Mammary epithelial cell (primary cell): ENCODE measurements at regions of chr17 and their contacts with region 1.

Region 1: GRCh38 chr17:17001874-17002520 is 30.1 kb upstream of the TNFRSF13B start:
- DNase-seq: peak; percentile 55
- H3K4me3 ChIP-seq: no peak overlapping the region
- H3K27ac ChIP-seq: no peak overlapping the region
- H3K4me1 ChIP-seq: no peaks in the 10 kb centered on the region
- H3K27me3 ChIP-seq: no peaks in the 10 kb centered on the region
- CTCF ChIP-seq: peak; percentile 83 to 96

Region 2: DNA sequence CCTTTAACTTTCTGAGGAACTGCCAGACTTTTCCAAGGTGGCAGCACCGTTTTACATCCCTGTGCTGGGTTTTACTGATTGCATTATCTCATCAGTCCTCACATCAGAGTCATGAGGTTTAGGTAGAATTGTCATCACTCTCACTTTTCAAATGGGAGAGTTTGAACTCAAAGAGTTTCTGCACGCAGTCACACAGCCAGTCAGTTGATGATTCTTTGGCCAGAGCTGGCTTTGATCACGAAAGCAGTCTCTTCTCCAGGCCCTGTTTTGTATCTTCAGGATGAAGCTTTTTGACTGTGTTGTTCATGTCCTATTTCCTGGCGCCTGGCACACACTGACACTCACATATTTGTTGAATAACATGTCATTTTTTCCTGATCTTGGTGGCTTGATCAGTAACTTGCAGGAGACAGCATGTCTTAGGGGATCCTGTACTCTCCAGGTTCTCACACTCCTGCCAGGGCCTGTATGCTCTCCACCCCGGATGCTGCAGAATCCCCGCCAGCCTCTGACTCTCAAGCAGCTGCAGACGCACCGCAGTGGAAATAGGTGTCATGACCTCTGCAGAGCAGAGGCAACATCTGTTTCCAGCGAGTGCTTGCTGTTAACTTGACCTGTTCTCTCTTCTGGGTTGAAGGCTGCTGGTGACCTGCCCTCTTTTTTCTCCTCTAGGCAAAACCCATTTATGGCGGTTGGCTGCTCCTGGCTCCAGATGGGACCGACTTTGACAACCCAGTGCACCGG is 73.2 kb after region 1 on chr17:
- CTCF ChIA-PET with region 1: no interaction called
- dilution Hi-C with region 1: no loop called
- in situ Hi-C with region 1: no loop called
- intact Hi-C with region 1: loop called (anchors 10 kb)
- DNase-seq: peak; percentile 54
- H3K4me3 ChIP-seq: no peak overlapping the region
- H3K27ac ChIP-seq: peak overlapping the region; percentile 9
- H3K4me1 ChIP-seq: peaks cover 54% of the 10 kb centered on the region
- H3K27me3 ChIP-seq: no peaks in the 10 kb centered on the region
- CTCF ChIP-seq: no peak

Region 3: GRCh38 chr17:17115620-17116019 is 113.6 kb after region 1 on chr17:
- CTCF ChIA-PET with region 1: no interaction called
- dilution Hi-C with region 1: no loop called
- in situ Hi-C with region 1: no loop called
- intact Hi-C with region 1: no loop called
- DNase-seq: no peak
- H3K4me3 ChIP-seq: no peak overlapping the region
- H3K27ac ChIP-seq: no peak overlapping the region
- H3K4me1 ChIP-seq: peaks cover 44% of the 10 kb centered on the region
- H3K27me3 ChIP-seq: no peaks in the 10 kb centered on the region
- CTCF ChIP-seq: no peak

Region 4: DNA sequence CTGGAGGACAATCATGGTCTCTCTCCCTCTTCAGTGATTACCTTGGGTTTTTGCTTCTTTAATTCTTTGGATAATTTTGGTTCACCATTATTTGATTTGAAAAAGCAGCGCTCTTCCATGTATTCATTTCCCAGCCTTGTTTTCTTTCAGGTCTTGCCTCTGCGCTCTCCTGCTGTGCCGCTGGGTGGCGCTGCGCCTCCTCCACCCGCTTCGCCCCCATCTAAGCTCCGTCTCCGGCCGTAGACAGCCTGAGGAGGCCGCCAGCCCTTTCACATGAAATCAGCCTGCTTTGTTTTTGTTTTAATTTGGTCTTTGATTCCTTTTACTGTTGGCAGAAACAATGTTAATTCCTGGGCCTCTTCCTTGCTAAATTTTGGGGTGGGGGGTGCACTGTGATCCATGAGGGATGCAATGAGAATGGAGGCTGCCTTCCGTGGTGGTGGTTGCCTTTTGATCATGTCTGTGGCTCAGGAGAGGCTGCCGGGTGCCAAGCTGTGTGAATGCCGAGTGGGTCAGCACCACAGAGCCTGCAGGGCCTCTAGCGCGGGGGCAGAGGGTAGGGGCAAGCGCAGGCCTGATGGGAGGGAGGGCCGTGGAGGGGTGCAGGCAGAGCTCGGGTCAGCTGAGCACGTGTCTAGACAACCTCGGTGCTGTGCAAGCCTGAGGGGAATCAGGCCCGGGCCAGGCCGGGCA is 140.0 kb after region 1 on chr17:
- CTCF ChIA-PET with region 1: no interaction called
- dilution Hi-C with region 1: no loop called
- in situ Hi-C with region 1: no loop called
- intact Hi-C with region 1: loop called (anchors 2 kb)
- DNase-seq: peak; percentile 18
- H3K4me3 ChIP-seq: no peak overlapping the region
- H3K27ac ChIP-seq: no peak overlapping the region
- H3K4me1 ChIP-seq: peaks cover 35% of the 10 kb centered on the region
- H3K27me3 ChIP-seq: no peaks in the 10 kb centered on the region
- CTCF ChIP-seq: peak; percentile 98

Region 5: DNA sequence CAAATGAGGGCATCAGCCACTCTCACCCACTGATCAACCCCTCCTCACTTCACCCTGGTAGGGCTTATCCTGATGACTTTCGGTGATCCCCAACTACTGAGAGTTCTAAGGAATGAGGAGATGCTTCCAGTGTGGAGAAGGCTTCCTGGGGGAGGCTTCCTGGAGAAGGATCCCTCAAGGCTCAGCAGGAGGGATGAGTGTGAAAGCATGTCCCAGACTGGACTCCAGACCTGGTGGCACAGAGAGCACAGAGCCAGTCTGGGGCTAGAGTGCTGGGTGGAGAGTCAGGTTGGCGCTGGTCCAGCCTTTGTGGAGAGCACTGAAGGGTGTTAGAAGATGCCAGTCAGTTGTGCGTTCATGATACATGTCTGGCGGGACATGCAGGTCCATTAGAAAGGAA is 150.4 kb after region 1 on chr17:
- CTCF ChIA-PET with region 1: no interaction called
- dilution Hi-C with region 1: no loop called
- in situ Hi-C with region 1: no loop called
- intact Hi-C with region 1: no loop called
- DNase-seq: peak; percentile 11
- H3K4me3 ChIP-seq: no peak overlapping the region
- H3K27ac ChIP-seq: peak overlapping the region; percentile 85
- H3K4me1 ChIP-seq: peaks cover 66% of the 10 kb centered on the region
- H3K27me3 ChIP-seq: no peaks in the 10 kb centered on the region
- CTCF ChIP-seq: no peak

Region 6: GRCh38 chr17:17237026-17237799 is 235.2 kb after region 1 on chr17 and contains the start of gene FLCN:
- CTCF ChIA-PET with region 1: no interaction called
- dilution Hi-C with region 1: no loop called
- in situ Hi-C with region 1: no loop called
- intact Hi-C with region 1: loop called (anchors 5 kb)
- DNase-seq: peak; percentile 81
- H3K4me3 ChIP-seq: peak within 1 kb of the TSS; percentile 68 to 78 (median 71)
- H3K27ac ChIP-seq: peak within 1 kb of the TSS; percentile 97
- H3K4me1 ChIP-seq: peaks cover 12% of the 10 kb centered on the region
- H3K27me3 ChIP-seq: no peaks in the 10 kb centered on the region
- CTCF ChIP-seq: no peak
- total RNA-seq, gene FLCN: 41.7 to 59.0 TPM

Region 7: GRCh38 chr17:17641621-17642409 is 639.8 kb after region 1 on chr17:
- CTCF ChIA-PET with region 1: no interaction called
- dilution Hi-C with region 1: no loop called
- in situ Hi-C with region 1: no loop called
- intact Hi-C with region 1: loop called (anchors 5 kb)
- DNase-seq: peak; percentile 54
- H3K4me3 ChIP-seq: no peak overlapping the region
- H3K27ac ChIP-seq: no peak overlapping the region
- H3K4me1 ChIP-seq: peaks cover 3% of the 10 kb centered on the region
- H3K27me3 ChIP-seq: no peaks in the 10 kb centered on the region
- CTCF ChIP-seq: peak; percentile 85 to 90